Mammary epithelial cell (primary cell): ENCODE measurements at regions of chr20 and their contacts with region 1.

Region 1: DNA sequence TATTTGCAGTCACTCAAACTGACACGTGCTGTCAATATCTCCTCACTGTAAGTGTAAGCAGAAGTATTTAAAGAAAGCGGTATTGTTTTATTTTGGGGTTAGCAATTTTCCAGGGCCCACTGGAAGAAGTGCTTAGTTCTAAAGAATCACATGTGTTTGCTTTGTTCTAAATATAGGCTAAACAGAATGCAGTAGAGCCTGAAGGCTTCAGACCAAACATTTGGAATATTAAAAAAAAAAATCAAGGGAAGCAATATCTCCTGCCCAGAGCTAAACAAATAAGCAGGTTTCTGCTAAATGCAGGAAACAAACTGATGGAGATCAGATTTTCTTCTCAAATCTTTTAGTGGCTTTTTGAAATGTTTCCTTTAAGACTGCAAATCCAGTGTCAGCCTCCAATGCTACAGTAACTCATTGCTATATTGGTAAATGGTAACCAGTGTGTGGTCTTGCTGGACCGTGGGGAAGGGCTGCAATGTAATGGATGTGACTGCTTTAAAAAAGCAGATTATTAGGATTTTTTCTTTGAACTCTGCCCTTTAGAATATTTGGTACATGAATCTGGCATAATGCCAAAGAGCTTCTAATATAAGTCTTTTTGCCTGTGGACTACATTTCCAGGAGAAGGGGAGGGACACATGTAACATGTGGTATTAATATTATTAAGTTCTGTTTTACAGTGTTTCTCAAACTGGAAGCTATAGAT is 317.1 kb upstream of the FERMT1 start:
- DNase-seq: no peak
- H3K4me3 ChIP-seq: no peak overlapping the region
- H3K27ac ChIP-seq: no peak overlapping the region
- H3K4me1 ChIP-seq: no peaks in the 10 kb centered on the region
- H3K27me3 ChIP-seq: no peaks in the 10 kb centered on the region
- CTCF ChIP-seq: no peak

Region 2: GRCh38 chr20:6355754-6356451 is 84.0 kb before region 1 on chr20:
- CTCF ChIA-PET with region 1: no interaction called
- dilution Hi-C with region 1: loop called (anchors 5 kb)
- in situ Hi-C with region 1: no loop called
- intact Hi-C with region 1: no loop called
- DNase-seq: peak; percentile 9
- H3K4me3 ChIP-seq: no peak overlapping the region
- H3K27ac ChIP-seq: no peak overlapping the region
- H3K4me1 ChIP-seq: no peaks in the 10 kb centered on the region
- H3K27me3 ChIP-seq: no peaks in the 10 kb centered on the region
- CTCF ChIP-seq: no peak

Region 3: DNA sequence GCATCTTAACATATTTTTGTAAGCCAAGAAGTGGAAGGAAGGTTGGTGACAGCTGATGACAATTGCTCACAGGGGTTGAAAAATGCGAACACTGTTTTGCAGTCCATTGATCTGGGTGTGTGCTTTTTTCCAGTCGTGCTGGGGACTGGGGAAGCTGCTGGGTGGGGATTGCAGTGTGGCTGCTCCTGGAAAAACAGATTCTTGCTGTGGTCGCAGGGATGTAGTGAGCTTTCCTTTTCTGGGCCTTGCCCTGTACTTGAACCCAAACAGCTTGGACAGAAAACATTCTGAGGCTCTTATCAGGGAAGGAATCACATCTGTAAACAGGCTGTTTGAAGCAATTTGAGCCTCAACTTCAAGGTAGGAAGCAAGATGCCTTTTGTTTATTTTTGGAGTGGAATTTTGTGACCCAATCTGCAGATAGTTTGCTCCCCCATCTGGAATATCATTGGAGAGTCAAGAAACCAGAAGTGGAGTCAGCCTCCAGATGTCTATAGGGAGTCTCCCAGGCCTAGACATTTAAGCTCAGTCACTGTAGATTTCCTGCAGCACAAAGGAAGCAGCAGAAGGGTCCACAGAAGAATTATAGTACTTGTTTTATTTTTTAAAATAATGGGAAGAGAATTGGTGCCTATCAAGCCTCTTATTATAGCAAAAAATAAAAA is 37.9 kb before region 1 on chr20:
- CTCF ChIA-PET with region 1: no interaction called
- dilution Hi-C with region 1: no loop called
- in situ Hi-C with region 1: no loop called
- intact Hi-C with region 1: no loop called
- DNase-seq: no peak
- H3K4me3 ChIP-seq: no peak overlapping the region
- H3K27ac ChIP-seq: no peak overlapping the region
- H3K4me1 ChIP-seq: peaks cover 3% of the 10 kb centered on the region
- H3K27me3 ChIP-seq: no peaks in the 10 kb centered on the region
- CTCF ChIP-seq: no peak